ENCODE measurements at regions of chr5 and their contacts with region 1.

Region 1: GRCh38 chr5:147466360-147466980 is 43.4 kb downstream of the DPYSL3 start:
- DNase-seq: no peak
- ATAC-seq: no peak
- H3K4me3 ChIP-seq: no peak overlapping the region
- H3K27ac ChIP-seq: no peak overlapping the region
- H3K4me1 ChIP-seq: no peaks in the 10 kb centered on the region
- H3K27me3 ChIP-seq: no peaks in the 10 kb centered on the region
- CTCF ChIP-seq: no peak

Region 2: GRCh38 chr5:147339313-147339712 is 127.2 kb before region 1 on chr5:
- intact Hi-C with region 1: no loop called
- DNase-seq: no peak
- ATAC-seq: no peak
- H3K4me3 ChIP-seq: no peak overlapping the region
- H3K27ac ChIP-seq: no peak overlapping the region
- H3K4me1 ChIP-seq: no peaks in the 10 kb centered on the region
- H3K27me3 ChIP-seq: no peaks in the 10 kb centered on the region
- CTCF ChIP-seq: no peak

Region 3: GRCh38 chr5:147504011-147504410 is 37.5 kb after region 1 on chr5:
- intact Hi-C with region 1: loop called in 1 of 2 experiments (anchors 5 kb)
- DNase-seq: peak in 1 of 2 donors; percentile 40
- ATAC-seq: peak in 2 of 4 donors; percentile 44 to 51
- H3K4me3 ChIP-seq: no peak overlapping the region
- H3K27ac ChIP-seq: no peak overlapping the region
- H3K4me1 ChIP-seq: no peaks in the 10 kb centered on the region
- H3K27me3 ChIP-seq: no peaks in the 10 kb centered on the region
- CTCF ChIP-seq: no peak

Region 4: DNA sequence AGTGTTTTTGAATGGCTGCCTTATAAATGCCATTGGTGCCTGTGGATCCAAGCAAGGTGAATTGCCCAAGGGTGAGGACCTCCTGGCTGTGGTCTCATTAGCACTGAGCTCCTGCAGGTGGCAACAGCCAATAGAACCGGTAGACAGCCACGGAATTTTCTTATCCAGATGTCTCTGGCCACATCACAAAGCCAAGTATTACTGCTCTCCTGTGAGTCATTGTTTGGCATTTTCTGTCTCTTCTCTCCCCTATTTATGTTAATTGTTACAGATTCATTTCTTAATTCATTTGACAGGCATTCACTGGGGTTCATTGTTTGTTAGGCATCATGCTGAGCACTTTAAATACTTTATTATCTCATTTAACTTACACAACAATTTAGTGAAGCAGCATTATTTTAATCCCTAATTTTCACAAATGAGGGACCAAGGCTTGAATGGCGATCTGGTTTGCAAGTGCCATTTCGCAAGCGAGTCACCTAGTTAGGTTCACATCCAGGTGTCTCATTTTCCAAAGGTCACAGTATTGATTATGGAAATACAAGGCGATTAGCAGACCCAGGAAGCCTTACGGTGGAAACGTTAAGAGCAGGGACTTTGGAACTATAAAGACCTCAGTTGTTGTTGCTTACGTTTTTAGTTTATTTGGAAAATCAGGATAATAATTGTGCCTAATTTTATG is 101.6 kb after region 1 on chr5:
- intact Hi-C with region 1: no loop called
- DNase-seq: no peak
- ATAC-seq: no peak
- H3K4me3 ChIP-seq: no peak overlapping the region
- H3K27ac ChIP-seq: no peak overlapping the region
- H3K4me1 ChIP-seq: no peaks in the 10 kb centered on the region
- H3K27me3 ChIP-seq: no peaks in the 10 kb centered on the region
- CTCF ChIP-seq: no peak